Heart left ventricle (tissue), 16 donors: ENCODE measurements at regions of chr3 and their contacts with region 1.

Region 1: DNA sequence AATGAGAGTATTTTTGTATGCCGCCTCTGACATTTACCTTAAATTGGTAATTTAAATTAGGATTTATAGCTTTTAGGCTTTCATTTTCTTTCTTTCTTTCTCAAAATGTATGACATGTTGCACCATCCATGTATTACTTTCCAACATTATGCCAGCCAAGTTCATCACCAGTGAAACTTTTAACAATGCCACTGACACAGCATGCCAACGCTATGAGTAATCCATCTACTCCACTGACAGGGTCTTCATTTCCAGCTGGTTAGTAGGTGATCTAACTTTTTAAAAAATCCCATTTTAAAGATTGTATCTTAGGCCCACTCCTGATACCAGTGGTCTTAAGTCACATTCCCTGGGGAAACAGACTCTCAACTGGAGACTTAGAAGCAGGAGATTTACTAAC is 21.8 kb upstream of the CLDN16 start:
- DNase-seq: no peak
- ATAC-seq: no peak
- H3K4me3 ChIP-seq: no peak overlapping the region
- H3K27ac ChIP-seq: no peak overlapping the region
- H3K4me1 ChIP-seq: no peaks in the 10 kb centered on the region
- H3K27me3 ChIP-seq: no peaks in the 10 kb centered on the region
- CTCF ChIP-seq: no peak
- POLR2A ChIP-seq: no peak

Region 2: GRCh38 chr3:190378240-190378891 is 12.2 kb after region 1 on chr3:
- intact Hi-C with region 1: loop called in 1 of 10 experiments (anchors 1 kb)
- DNase-seq: no peak
- ATAC-seq: peak in 2 of 4 donors; percentile 26 to 39
- H3K4me3 ChIP-seq: no peak overlapping the region
- H3K27ac ChIP-seq: no peak overlapping the region
- H3K4me1 ChIP-seq: no peaks in the 10 kb centered on the region
- H3K27me3 ChIP-seq: no peaks in the 10 kb centered on the region
- CTCF ChIP-seq: no peak
- POLR2A ChIP-seq: no peak